ENCODE measurements at regions of chr7 and their contacts with region 1.

Region 1: DNA sequence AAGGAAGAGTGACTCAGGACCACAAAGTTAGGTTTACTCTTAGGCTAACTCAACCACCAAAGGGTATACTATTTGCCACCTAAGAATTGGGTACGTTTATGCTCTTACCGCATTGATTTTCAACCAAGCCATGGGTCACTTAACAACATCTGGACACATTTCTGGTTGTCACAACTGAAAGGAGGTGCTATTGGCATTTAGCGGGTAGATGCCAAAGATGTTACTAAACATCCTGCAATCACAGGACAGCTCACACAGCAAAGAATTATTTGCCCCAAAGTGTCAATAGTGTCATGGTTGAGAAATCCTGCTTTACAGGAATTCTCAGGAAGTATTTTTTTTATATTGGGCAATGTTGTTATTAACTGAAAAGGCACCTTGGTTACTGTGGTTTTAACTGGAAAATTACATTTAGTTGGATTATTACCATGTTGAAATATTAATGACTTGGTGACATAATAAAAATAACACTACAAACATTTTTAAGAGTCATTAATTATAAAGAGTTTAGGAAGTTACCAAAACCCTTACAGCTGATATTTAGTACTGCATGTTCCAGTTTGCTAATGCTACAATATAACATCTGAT is 185.0 kb upstream of the TMEM196 start:
- DNase-seq: peak; percentile 98
- ATAC-seq: peak; percentile 92
- H3K4me3 ChIP-seq: no peak overlapping the region
- H3K27ac ChIP-seq: peak overlapping the region; percentile 99
- H3K4me1 ChIP-seq: peaks cover 19% of the 10 kb centered on the region
- H3K27me3 ChIP-seq: no peaks in the 10 kb centered on the region
- CTCF ChIP-seq: no peak

Region 2: GRCh38 chr7:19754521-19755116 is 203.8 kb before region 1 on chr7:
- CTCF ChIA-PET with region 1: no interaction called
- POLR2A ChIA-PET with region 1: interaction called, 4 read pairs
- intact Hi-C with region 1: loop called (anchors 1 kb)
- DNase-seq: peak; percentile 88
- ATAC-seq: no peak
- H3K4me3 ChIP-seq: no peak overlapping the region
- H3K27ac ChIP-seq: no peak overlapping the region
- H3K4me1 ChIP-seq: peaks cover 6% of the 10 kb centered on the region; the same call in 1 of the 2 replicates
- H3K27me3 ChIP-seq: no peaks in the 10 kb centered on the region
- CTCF ChIP-seq: peak; percentile 82

Region 3: DNA sequence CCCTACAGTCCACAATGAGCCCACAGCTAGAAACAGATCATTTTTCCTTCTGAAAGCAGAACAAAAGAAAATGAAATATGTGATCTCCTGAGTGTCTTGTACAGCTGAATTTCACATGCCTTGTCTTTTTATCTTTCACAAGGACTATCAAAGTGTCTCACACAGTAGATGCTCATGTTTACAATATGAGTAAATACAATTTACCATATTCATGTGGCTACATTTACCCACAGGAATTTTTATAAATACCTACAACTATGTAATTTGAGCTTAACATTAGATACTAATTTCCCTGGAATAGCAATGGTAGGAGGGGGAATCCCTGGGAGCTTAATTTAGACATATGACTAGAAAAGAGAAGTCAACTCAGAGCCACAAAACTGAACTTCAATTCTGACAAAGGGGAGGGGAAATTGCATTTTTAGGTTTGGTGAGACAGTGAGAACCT is 72.5 kb after region 1 on chr7:
- CTCF ChIA-PET with region 1: no interaction called
- POLR2A ChIA-PET with region 1: no interaction called
- intact Hi-C with region 1: loop called (anchors 1 kb)
- DNase-seq: peak; percentile 86
- ATAC-seq: peak; percentile 98
- H3K4me3 ChIP-seq: peak overlapping the region; percentile 12; the same call in 1 of the 2 replicates
- H3K27ac ChIP-seq: peak overlapping the region; percentile 52
- H3K4me1 ChIP-seq: peaks cover 21% of the 10 kb centered on the region
- H3K27me3 ChIP-seq: no peaks in the 10 kb centered on the region
- CTCF ChIP-seq: no peak

Region 4: DNA sequence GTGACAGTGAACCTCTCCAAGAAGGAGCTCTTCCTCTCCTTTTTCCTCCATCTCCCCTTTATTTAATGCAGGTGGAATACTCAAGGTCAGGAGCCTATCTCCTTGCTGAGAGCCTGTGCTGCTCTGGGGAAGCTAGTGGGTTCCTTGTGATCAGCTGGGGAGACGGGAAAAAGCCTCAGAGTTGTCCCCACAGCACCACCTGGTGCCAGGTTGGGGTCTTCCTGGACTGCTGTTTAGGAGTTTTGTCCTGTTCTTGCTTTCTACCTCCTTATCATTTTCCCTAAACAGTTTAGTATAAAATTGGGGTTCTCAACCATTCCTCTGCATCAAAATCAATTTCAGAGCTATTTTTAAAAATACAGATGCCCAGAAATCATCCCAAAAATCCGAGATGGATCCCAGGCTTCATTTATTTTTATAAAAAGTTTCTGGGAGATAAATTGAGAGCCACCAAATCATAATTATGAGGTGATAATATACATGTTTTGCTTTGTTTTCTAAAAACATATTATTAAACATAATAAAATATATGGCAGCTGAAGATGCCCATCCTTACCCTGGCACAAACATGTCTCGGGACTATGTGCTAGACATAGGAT is 214.4 kb after region 1 on chr7:
- CTCF ChIA-PET with region 1: interaction called, 3 read pairs
- POLR2A ChIA-PET with region 1: no interaction called
- intact Hi-C with region 1: loop called (anchors 1 kb)
- DNase-seq: peak; percentile 74
- ATAC-seq: peak; percentile 99
- H3K4me3 ChIP-seq: no peak overlapping the region
- H3K27ac ChIP-seq: no peak overlapping the region
- H3K4me1 ChIP-seq: no peaks in the 10 kb centered on the region
- H3K27me3 ChIP-seq: no peaks in the 10 kb centered on the region
- CTCF ChIP-seq: peak; percentile 77

Region 5: GRCh38 chr7:20310963-20311742 is 352.8 kb after region 1 on chr7:
- CTCF ChIA-PET with region 1: no interaction called
- POLR2A ChIA-PET with region 1: no interaction called
- intact Hi-C with region 1: loop called (anchors 1 kb)
- DNase-seq: peak; percentile 81
- ATAC-seq: peak; percentile 45; the same call in 1 of the 2 replicates
- H3K4me3 ChIP-seq: no peak overlapping the region
- H3K27ac ChIP-seq: no peak overlapping the region
- H3K4me1 ChIP-seq: no peaks in the 10 kb centered on the region
- H3K27me3 ChIP-seq: no peaks in the 10 kb centered on the region
- CTCF ChIP-seq: peak; percentile 75

Measured in PC-3 (cell line).